ENCODE measurements at regions of chr1 and their contacts with region 1.

Region 1: GRCh38 chr1:25895365-25895993 is 10.7 kb downstream of the STMN1 start:
- DNase-seq: peak; percentile 86 to 93
- ATAC-seq: peak; percentile 84 to 86
- H3K4me3 ChIP-seq: no peak overlapping the region
- H3K27ac ChIP-seq: peak overlapping the region; percentile 94 to 98
- H3K4me1 ChIP-seq: peaks cover 40% of the 10 kb centered on the region
- CTCF ChIP-seq: peak; percentile 86
- EP300 ChIP-seq: no peak
- POLR2A ChIP-seq: no peak
- RAD21 ChIP-seq: peak; percentile 83 to 84

Region 2: DNA sequence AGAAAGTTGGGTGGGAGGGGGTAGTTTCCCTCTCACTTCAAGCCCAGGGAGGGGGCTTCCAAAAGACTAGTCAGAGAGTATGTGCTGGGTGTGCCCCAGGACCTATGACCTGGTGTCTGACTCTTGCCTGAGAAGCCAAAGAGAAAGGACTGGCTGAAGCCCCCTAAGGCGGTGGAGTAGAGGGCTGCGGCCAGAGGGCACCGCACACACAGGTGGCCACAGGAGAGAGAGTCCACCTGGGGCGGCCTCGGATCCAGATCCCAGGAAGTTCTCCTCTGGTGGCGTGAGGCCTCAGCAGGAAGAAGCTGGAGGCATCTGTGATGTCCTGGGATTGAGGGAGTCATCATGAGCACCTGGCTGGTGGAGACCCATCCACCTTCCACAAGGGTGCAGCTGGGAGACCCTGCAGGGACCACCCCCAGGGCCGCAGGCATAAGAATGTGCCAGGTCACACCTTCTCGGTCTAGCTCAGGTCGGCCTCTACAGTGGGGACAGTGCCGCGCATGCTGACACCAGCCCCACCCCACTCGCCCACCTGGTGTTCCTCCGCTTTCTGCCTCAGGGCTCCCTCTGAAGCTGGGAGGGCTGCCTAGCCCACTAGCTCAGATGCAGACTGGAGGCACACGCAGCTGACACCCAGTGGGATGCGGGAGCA is 14.4 kb before region 1 on chr1:
- CTCF ChIA-PET with region 1: interaction called, 26 read pairs
- POLR2A ChIA-PET with region 1: interaction called, 3 read pairs
- DNase-seq: no peak
- ATAC-seq: no peak
- H3K4me3 ChIP-seq: no peak overlapping the region
- H3K27ac ChIP-seq: no peak overlapping the region
- H3K4me1 ChIP-seq: no peaks in the 10 kb centered on the region
- CTCF ChIP-seq: no peak
- EP300 ChIP-seq: no peak
- POLR2A ChIP-seq: no peak
- RAD21 ChIP-seq: no peak

Region 3: GRCh38 chr1:25990702-25991395 is 95.4 kb after region 1 on chr1:
- CTCF ChIA-PET with region 1: interaction called, 31 read pairs
- POLR2A ChIA-PET with region 1: no interaction called
- DNase-seq: no peak
- ATAC-seq: no peak
- H3K4me3 ChIP-seq: no peak overlapping the region
- H3K27ac ChIP-seq: no peak overlapping the region
- H3K4me1 ChIP-seq: no peaks in the 10 kb centered on the region
- CTCF ChIP-seq: no peak
- EP300 ChIP-seq: no peak
- POLR2A ChIP-seq: no peak
- RAD21 ChIP-seq: no peak

Region 4: GRCh38 chr1:26005434-26006105 is 110.1 kb after region 1 on chr1:
- CTCF ChIA-PET with region 1: interaction called, 84 read pairs
- POLR2A ChIA-PET with region 1: no interaction called
- DNase-seq: no peak
- ATAC-seq: no peak
- H3K4me3 ChIP-seq: no peak overlapping the region
- H3K27ac ChIP-seq: no peak overlapping the region
- H3K4me1 ChIP-seq: no peaks in the 10 kb centered on the region
- CTCF ChIP-seq: no peak
- EP300 ChIP-seq: no peak
- POLR2A ChIP-seq: no peak
- RAD21 ChIP-seq: no peak